H1 (cell line): ENCODE measurements at regions of chr5 and their contacts with region 1.

Region 1: GRCh38 chr5:52849544-52849943 is 61.8 kb downstream of the ITGA1 start:
- DNase-seq: no peak
- H3K4me3 ChIP-seq: no peak overlapping the region
- H3K27ac ChIP-seq: no peak overlapping the region
- H3K4me1 ChIP-seq: no peaks in the 10 kb centered on the region
- H3K27me3 ChIP-seq: peaks cover 0 to 3% (median 0%) of the 10 kb centered on the region in 4 experiments; a peak in 1 of 7 replicates
- CTCF ChIP-seq: no peak
- EP300 ChIP-seq: no peak
- POLR2A ChIP-seq: no peak
- RAD21 ChIP-seq: no peak

Region 2: GRCh38 chr5:52822437-52822836 is 27.1 kb before region 1 on chr5:
- CTCF ChIA-PET with region 1: no interaction called
- POLR2A ChIA-PET with region 1: no interaction called
- DNase-seq: no peak
- H3K4me3 ChIP-seq: no peak overlapping the region
- H3K27ac ChIP-seq: no peak overlapping the region
- H3K4me1 ChIP-seq: no peaks in the 10 kb centered on the region; a peak in 1 of 7 replicates
- H3K27me3 ChIP-seq: no peaks in the 10 kb centered on the region
- CTCF ChIP-seq: no peak
- EP300 ChIP-seq: no peak
- POLR2A ChIP-seq: no peak
- RAD21 ChIP-seq: no peak

Region 3: GRCh38 chr5:52867809-52868208 is 18.3 kb after region 1 on chr5:
- CTCF ChIA-PET with region 1: interaction called, 13 read pairs
- POLR2A ChIA-PET with region 1: interaction called, 3 read pairs
- DNase-seq: no peak
- H3K4me3 ChIP-seq: no peak overlapping the region
- H3K27ac ChIP-seq: no peak overlapping the region
- H3K4me1 ChIP-seq: no peaks in the 10 kb centered on the region
- H3K27me3 ChIP-seq: no peaks in the 10 kb centered on the region
- CTCF ChIP-seq: no peak
- EP300 ChIP-seq: no peak
- POLR2A ChIP-seq: no peak
- RAD21 ChIP-seq: no peak